ENCODE measurements at regions of chr7 and their contacts with region 1.

Region 1: DNA sequence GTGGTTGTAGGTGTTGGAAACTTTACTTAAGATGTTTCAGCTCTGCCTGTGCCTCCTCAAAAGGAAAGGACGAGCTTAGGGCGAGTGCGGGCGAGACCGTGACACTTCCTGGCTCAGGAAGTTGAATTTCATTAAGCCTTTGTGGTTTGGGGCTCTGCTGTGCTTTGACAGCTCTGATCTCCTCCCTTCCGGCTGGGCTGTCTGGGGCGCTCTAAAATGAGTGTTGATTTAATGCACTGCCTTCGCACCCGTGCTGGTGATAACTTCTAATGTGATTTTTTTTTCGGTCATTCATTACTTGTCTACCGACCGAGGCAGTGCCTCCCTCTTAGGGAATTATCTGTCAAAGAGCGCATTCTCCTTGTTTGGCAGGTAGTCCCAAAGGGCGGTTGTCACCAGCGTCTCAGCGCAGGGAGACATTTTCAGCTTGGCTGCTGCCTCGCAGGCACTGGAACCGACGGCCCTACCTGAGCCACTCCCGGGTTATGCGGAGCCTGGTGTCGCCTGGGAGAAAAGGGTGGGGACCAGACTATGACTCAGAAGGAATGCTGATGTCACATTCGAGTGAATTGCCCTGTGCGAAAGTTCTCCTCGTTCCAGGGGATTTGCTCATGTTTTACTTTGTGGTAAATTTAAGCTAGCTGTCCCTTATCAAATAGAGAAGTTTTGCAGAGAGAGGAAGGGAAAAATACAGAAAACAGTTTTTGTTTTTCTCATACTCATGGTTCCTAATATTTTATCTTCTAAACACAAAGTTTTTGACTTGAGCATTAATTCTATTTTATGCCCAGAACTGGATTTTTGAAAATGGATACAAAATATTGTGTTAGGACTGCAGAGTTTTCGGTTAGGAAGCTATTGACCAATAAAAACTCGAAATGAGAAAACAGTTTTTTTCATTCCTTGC is 920 bp downstream of the TES start:
- DNase-seq: peak; percentile 52
- ATAC-seq: peak; percentile 71
- H3K4me3 Mint-ChIP-seq: peak overlapping the region; percentile 98
- H3K27ac Mint-ChIP-seq: peak overlapping the region; percentile 96
- H3K4me1 Mint-ChIP-seq: peaks cover 52% of the 10 kb centered on the region
- H3K27me3 Mint-ChIP-seq: no peaks in the 10 kb centered on the region
- CTCF ChIP-seq: no peak

Region 2: GRCh38 chr7:115864082-115864481 is 347.2 kb before region 1 on chr7:
- CTCF ChIA-PET with region 1: no interaction called
- POLR2A ChIA-PET with region 1: no interaction called
- intact Hi-C with region 1: no loop called
- DNase-seq: no peak
- ATAC-seq: no peak
- H3K4me3 Mint-ChIP-seq: no peak overlapping the region
- H3K27ac Mint-ChIP-seq: no peak overlapping the region
- H3K4me1 Mint-ChIP-seq: no peaks in the 10 kb centered on the region
- H3K27me3 Mint-ChIP-seq: peaks cover 3% of the 10 kb centered on the region
- CTCF ChIP-seq: no peak

Region 3: DNA sequence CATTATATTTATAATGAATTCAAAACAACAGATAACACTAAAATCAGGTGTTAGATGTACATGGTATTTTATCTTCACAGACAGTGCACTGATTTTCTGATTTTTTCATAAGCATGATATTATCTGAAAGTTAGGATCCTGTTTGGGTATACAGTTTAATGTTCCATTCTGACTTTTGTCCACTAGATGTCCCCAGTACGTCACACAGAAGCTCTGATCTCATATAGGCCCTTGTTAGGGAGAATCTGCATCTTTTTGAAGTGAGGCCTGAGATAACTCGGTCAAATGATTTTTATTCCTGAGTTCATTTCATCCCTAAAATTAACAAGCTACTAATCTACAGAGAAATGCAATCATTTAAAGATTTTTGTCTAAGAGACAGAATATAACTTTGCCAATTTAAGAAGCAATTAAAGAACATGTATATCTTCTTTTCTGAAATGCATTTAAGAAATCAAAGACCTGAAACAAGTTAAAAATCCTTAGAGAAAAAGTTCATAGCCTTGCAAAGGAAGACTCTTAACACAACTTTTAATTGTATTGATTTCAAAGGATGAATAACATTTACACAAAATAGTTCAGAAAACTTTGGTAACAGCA is 73.0 kb before region 1 on chr7:
- CTCF ChIA-PET with region 1: interaction called, 3 read pairs
- POLR2A ChIA-PET with region 1: interaction called, 4 read pairs
- intact Hi-C with region 1: loop called (anchors 1 kb)
- DNase-seq: no peak
- ATAC-seq: peak; percentile 91
- H3K4me3 Mint-ChIP-seq: no peak overlapping the region
- H3K27ac Mint-ChIP-seq: no peak overlapping the region
- H3K4me1 Mint-ChIP-seq: peaks cover 33% of the 10 kb centered on the region
- H3K27me3 Mint-ChIP-seq: no peaks in the 10 kb centered on the region
- CTCF ChIP-seq: peak; percentile 48

Region 4: GRCh38 chr7:116194115-116194514 is 17.1 kb before region 1 on chr7:
- CTCF ChIA-PET with region 1: no interaction called
- POLR2A ChIA-PET with region 1: interaction called, 5 read pairs
- intact Hi-C with region 1: loop called (anchors 2 kb)
- DNase-seq: no peak
- ATAC-seq: no peak
- H3K4me3 Mint-ChIP-seq: no peak overlapping the region
- H3K27ac Mint-ChIP-seq: no peak overlapping the region
- H3K4me1 Mint-ChIP-seq: no peaks in the 10 kb centered on the region
- H3K27me3 Mint-ChIP-seq: no peaks in the 10 kb centered on the region
- CTCF ChIP-seq: no peak

Region 5: GRCh38 chr7:116224492-116225098 is 13.3 kb after region 1 on chr7:
- CTCF ChIA-PET with region 1: interaction called, 7 read pairs
- POLR2A ChIA-PET with region 1: interaction called, 34 read pairs
- intact Hi-C with region 1: loop called (anchors 1 kb)
- DNase-seq: no peak
- ATAC-seq: peak; percentile 82
- H3K4me3 Mint-ChIP-seq: peak overlapping the region; percentile 62
- H3K27ac Mint-ChIP-seq: peak overlapping the region; percentile 72
- H3K4me1 Mint-ChIP-seq: peaks cover 84% of the 10 kb centered on the region
- H3K27me3 Mint-ChIP-seq: no peaks in the 10 kb centered on the region
- CTCF ChIP-seq: no peak

Region 6: GRCh38 chr7:116698930-116699710 is 487.9 kb after region 1 on chr7:
- CTCF ChIA-PET with region 1: no interaction called
- POLR2A ChIA-PET with region 1: no interaction called
- intact Hi-C with region 1: no loop called
- DNase-seq: no peak
- ATAC-seq: no peak
- H3K4me3 Mint-ChIP-seq: no peak overlapping the region
- H3K27ac Mint-ChIP-seq: no peak overlapping the region
- H3K4me1 Mint-ChIP-seq: no peaks in the 10 kb centered on the region
- H3K27me3 Mint-ChIP-seq: peaks cover 51% of the 10 kb centered on the region
- CTCF ChIP-seq: no peak

Region 7: GRCh38 chr7:116862234-116862950 is 651.1 kb after region 1 on chr7 and contains the start of gene CAPZA2:
- CTCF ChIA-PET with region 1: no interaction called
- POLR2A ChIA-PET with region 1: no interaction called
- intact Hi-C with region 1: loop called (anchors 1 kb)
- DNase-seq: peak; percentile 98
- ATAC-seq: peak; percentile 87
- H3K4me3 Mint-ChIP-seq: peak within 1 kb of the TSS; percentile 98
- H3K27ac Mint-ChIP-seq: peak within 1 kb of the TSS; percentile 93
- H3K4me1 Mint-ChIP-seq: peaks cover 39% of the 10 kb centered on the region
- H3K27me3 Mint-ChIP-seq: peaks cover 5% of the 10 kb centered on the region
- CTCF ChIP-seq: no peak
- total RNA-seq, gene CAPZA2: 101 and 110 TPM in 2 replicates

Measured in activated B cell treated with CpG ODN at 0.5 μM for 24 hours (primary cell).